Dorsolateral prefrontal cortex (tissue), 120 donors: ENCODE measurements at regions of chr20 and their contacts with region 1.

Region 1: DNA sequence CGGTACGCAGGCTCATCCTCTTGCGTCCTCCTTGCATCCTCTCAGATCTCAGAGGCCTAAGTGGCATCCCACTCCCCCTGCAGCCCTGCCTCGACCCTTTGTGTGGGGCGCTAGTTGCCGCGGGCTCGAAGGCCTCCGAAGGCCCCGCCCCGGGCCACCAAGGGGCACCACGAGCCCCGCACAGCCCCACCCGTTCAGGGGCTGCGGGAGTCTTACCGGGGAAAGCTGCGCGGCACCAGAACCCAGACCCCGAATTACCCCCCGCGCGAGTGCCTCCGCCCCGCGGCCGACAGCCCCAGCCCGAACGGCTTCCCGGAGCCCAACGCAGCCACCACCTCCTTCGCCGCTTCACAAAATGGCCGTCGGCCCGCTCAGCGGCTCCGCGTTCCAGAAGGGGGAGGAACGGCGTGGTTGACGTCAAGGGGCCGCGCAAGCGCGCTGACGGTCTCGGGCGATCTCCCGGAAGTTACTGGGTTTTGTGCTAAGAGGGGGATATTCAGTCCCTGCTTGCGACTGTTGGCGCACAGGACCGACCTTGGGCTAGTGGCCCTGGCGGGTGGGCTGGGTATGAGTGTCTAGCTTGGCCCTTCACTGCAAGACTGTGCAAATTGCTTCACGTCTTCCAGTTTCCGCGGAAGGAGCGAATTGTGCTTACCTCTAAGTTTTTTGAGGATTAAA is at the starts of genes CPNE1 and RBM12:
- DNase-seq: peak; percentile 85 to 95 (median 90)
- H3K4me3 ChIP-seq: peak within 1 kb of the TSS; percentile 66 to 99 (median 91)
- H3K27ac ChIP-seq: peak within 1 kb of the TSS; percentile 88 to 100 (median 98)
- H3K27me3 ChIP-seq: no peaks in the 10 kb centered on the region
- CTCF ChIP-seq: peak in 33 of 56 donors; percentile 3 to 55 (median 31)
- total RNA-seq, gene CPNE1: 65.9 to 194 (median 135) TPM
- total RNA-seq, gene RBM12: 48.7 to 99.3 (median 72.3) TPM

Region 2: DNA sequence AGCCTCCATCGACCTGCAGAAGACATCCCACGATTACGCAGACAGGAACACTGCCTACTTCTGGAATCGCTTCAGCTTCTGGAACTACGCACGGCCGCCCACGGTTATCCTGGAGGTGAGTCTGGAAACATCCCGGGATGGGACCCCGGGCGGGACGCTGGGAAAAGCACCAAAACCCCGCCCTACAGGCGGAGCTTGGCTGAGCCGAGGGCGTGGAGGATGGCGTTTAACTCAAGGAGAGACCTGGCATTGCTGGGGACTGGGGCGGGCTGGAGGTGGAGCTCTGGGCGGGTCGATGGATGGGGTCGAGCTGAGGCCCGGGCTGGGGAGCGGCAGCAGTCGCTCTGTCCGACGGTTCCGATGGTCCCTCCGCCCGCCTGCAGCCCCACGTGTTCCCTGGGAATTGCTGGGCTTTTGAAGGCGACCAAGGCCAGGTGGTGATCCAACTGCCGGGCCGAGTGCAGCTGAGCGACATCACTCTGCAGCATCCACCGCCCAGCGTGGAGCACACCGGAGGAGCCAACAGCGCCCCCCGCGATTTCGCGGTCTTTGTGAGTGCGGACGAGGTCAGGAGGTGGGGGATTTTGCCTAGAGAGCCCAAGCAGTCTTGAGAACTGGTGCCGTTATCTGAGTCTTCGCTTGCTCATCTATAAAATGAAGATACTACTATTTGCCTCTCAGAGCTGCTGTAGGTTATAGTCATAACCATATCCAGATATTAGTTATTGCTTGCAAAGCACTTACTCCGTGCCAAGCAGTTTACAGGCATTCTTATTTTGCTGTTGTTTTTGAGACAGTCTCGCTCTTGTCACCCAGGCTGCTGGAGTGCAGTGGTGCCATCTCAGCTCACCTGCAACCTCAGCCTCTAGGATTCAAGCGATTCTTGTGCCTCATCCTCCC is 45.2 kb before region 1 on chr20:
- intact Hi-C with region 1: loop called (anchors 1 to 5 kb)
- DNase-seq: peak in 9 of 10 donors; percentile 33 to 72 (median 57)
- H3K4me3 ChIP-seq: peak overlapping the region; percentile 42 to 77 (median 66)
- H3K27ac ChIP-seq: peak overlapping the region in 20 of 59 donors; percentile 1 to 91 (median 42)
- H3K27me3 ChIP-seq: no peaks in the 10 kb centered on the region
- CTCF ChIP-seq: peak in 39 of 56 donors; percentile 6 to 51 (median 26)

Region 3: DNA sequence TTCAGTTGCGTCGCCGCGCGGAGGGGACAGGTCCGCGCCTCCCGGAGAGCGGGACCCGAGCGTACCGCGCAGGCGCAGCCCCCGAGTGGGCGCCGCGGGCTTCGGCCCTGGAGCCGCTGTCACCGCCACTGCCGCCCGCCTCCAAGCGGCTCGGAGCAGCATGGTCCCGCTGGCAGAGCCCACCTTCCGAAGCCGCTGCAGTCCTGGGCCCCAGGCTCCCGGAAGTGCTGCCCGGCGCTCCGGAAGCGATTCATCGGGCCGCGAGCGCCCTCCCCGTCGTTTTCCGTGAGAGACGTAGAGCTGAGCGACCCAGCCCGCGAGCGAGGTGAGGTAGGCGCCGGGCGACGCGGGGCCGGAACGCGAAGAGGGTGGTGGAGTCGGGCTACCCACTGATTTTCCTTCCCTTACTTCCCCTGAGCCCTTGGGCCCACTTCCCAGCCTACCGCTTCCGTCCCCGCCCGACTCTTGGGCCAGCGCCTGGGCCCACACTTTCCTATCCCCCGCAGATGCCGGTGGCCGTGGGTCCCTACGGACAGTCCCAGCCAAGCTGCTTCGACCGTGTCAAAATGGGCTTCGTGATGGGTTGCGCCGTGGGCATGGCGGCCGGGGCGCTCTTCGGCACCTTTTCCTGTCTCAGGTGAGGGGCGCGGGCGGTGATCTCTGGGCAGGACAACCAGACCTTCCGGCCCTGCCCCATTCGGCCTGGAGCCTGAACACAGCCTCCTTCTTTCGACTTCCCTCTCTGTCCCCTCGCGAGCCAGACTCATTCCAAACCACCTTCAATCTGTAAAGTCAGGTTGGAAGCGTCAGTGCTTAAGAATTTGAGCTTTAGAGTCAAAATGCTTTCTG is 34.7 kb after region 1 on chr20 and contains the starts of genes NFS1 and ROMO1:
- intact Hi-C with region 1: loop called in 1 of 2 experiments (anchors 5 kb)
- DNase-seq: peak; percentile 76 to 92 (median 86)
- H3K4me3 ChIP-seq: peak within 1 kb of the TSS; percentile 71 to 100 (median 94)
- H3K27ac ChIP-seq: peak within 1 kb of the TSS; percentile 25 to 92 (median 83)
- H3K27me3 ChIP-seq: no peaks in the 10 kb centered on the region
- CTCF ChIP-seq: peak in 55 of 56 donors; percentile 16 to 73 (median 54)
- total RNA-seq, gene NFS1: 39.8 to 78.0 (median 57.4) TPM
- total RNA-seq, gene ROMO1: 28.9 to 82.8 (median 51.8) TPM

Region 4: GRCh38 chr20:35954200-35954906 is 289.7 kb after region 1 on chr20 and contains the start of gene SCAND1:
- intact Hi-C with region 1: loop called in 1 of 2 experiments (anchors 10 kb)
- DNase-seq: peak; percentile 87 to 97 (median 95)
- H3K4me3 ChIP-seq: peak within 1 kb of the TSS; percentile 69 to 100 (median 95)
- H3K27ac ChIP-seq: peak within 1 kb of the TSS; percentile 84 to 100 (median 96)
- H3K27me3 ChIP-seq: no peaks in the 10 kb centered on the region
- CTCF ChIP-seq: peak; percentile 88 to 100 (median 99)
- total RNA-seq, gene SCAND1: 20.1 to 63.9 (median 44.4) TPM